ENCODE measurements at regions of chrX and their contacts with region 1.

Region 1: DNA sequence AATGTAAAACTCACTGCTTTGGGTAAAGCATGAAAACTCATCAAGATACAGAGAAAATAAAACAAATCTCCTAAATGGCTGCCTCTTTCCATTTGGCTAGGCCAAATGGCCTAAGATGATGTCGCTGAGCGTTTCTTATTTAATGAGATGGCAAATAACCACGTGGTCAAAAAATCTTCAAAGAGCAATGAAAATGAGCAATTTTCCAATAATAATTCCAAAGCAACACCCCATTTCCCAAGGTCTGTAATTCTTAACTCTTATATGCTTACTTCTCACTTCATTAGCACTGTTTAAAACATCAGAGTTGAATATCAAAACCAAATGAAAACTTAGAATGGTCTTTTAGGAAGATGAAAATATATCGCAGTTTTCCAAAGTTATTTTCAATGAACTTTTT is 222.3 kb upstream of the MID1 start:
- DNase-seq: no peak
- H3K4me3 ChIP-seq: no peak overlapping the region
- H3K27ac ChIP-seq: no peak overlapping the region
- H3K4me1 ChIP-seq: no peaks in the 10 kb centered on the region
- H3K27me3 ChIP-seq: no peaks in the 10 kb centered on the region
- CTCF ChIP-seq: no peak

Region 2: DNA sequence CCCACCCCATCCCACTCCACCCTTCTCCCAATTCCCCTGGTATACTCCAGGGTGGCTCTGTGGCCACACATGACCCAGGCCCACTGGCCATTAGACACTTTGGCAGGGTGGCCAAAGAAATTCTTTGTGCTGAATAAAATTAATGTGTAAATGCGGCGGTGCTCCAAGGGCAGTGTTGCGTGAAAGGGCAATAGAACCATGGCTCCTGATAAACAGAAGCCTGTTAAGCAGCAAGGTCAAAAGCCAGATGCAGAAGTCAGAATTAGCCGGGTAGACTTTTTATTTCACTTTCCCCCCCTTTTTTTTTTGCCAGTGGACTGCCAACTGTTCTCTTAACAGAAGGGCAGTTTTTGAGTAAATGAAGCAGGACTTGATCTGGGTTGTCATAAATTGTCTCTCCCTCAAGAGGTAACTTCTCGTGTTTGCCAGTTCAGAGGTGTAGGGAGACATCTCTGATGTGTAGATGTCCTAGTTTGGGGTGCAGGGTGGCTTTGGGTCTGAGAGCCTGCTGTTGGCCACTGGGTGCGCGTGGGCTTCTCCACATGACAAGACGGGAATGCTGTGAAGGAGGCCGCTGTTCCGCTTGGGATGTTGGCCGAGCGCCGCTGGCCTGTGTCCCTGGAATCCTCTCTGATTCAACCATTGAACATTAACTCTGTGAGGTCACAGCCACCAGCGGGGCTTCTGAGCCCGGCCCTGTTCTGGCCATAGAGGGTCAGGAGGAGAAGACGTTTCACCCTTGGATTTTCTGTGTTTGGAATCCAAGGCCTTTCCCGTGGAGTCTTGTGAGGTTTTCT is 1238.3 kb before region 1 on chrX:
- CTCF ChIA-PET with region 1: no interaction called
- POLR2A ChIA-PET with region 1: no interaction called
- intact Hi-C with region 1: no loop called
- DNase-seq: no peak
- H3K4me3 ChIP-seq: no peak overlapping the region
- H3K27ac ChIP-seq: no peak overlapping the region
- H3K4me1 ChIP-seq: no peaks in the 10 kb centered on the region
- H3K27me3 ChIP-seq: no peaks in the 10 kb centered on the region
- CTCF ChIP-seq: no peak

Region 3: GRCh38 chrX:9635803-9636202 is 1206.8 kb before region 1 on chrX:
- CTCF ChIA-PET with region 1: no interaction called
- POLR2A ChIA-PET with region 1: no interaction called
- intact Hi-C with region 1: no loop called
- DNase-seq: no peak
- H3K4me3 ChIP-seq: no peak overlapping the region
- H3K27ac ChIP-seq: no peak overlapping the region
- H3K4me1 ChIP-seq: no peaks in the 10 kb centered on the region
- H3K27me3 ChIP-seq: no peaks in the 10 kb centered on the region
- CTCF ChIP-seq: no peak

Region 4: GRCh38 chrX:10030570-10030969 is 812.1 kb before region 1 on chrX:
- CTCF ChIA-PET with region 1: no interaction called
- POLR2A ChIA-PET with region 1: interaction called, 10 read pairs
- intact Hi-C with region 1: no loop called
- DNase-seq: no peak
- H3K4me3 ChIP-seq: no peak overlapping the region
- H3K27ac ChIP-seq: no peak overlapping the region
- H3K4me1 ChIP-seq: peaks cover 3% of the 10 kb centered on the region
- H3K27me3 ChIP-seq: no peaks in the 10 kb centered on the region
- CTCF ChIP-seq: no peak

Measured in A673 (cell line).